ENCODE measurements at regions of chr5 and their contacts with region 1.

Region 1: GRCh38 chr5:172044631-172045314 is 38.3 kb upstream of the FBXW11 start:
- DNase-seq: no peak
- CTCF ChIP-seq: no peak

Region 2: GRCh38 chr5:171913987-171914273 is 130.8 kb before region 1 on chr5:
- in situ Hi-C with region 1: loop called (anchors 10 kb)
- DNase-seq: no peak
- CTCF ChIP-seq: no peak

Region 3: DNA sequence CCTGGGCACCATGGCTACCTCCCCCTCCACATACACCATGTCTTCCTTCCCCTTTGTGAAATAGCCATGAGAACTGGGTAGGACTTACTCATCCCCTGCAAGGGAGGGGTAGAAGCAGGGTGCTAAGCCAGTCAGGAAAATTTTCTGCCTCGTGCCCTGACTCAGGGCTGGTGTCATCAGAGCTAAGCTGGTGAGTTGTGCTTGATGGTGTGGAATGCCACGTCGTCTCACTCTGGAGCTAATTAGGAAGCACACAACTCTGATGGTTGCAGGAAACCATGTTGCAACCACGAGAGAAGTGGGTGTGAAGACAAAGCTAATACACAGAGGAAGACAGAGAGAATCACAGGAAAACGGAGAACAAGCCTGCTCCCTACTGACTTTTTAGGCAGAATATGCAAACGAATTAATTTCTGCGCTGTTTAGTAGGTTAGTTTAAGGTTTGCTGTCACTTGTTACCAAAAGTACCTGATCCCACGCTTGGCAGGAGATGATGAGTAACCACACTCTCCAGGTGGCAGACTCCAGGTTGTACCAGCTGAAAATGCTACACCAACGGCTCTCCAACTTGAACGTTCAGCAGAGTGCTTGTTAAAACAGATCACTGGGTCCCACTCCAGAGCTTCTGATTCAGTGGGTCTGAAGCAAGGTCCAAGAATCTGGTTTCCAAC is 88.7 kb after region 1 on chr5:
- in situ Hi-C with region 1: no loop called
- DNase-seq: no peak
- CTCF ChIP-seq: no peak